OCI-LY7 (cell line): ENCODE measurements at regions of chr17 and their contacts with region 1.

Region 1: GRCh38 chr17:9021158-9021991 is at the start of gene NTN1:
- DNase-seq: peak; percentile 25
- H3K4me3 ChIP-seq: peak within 1 kb of the TSS; percentile 68
- H3K27ac ChIP-seq: no peak within 1 kb of the TSS
- H3K4me1 ChIP-seq: no peaks in the 10 kb centered on the region
- CTCF ChIP-seq: no peak
- total RNA-seq, gene NTN1: 0.05 TPM in 1 of 2 replicates, not detected in the other

Region 2: DNA sequence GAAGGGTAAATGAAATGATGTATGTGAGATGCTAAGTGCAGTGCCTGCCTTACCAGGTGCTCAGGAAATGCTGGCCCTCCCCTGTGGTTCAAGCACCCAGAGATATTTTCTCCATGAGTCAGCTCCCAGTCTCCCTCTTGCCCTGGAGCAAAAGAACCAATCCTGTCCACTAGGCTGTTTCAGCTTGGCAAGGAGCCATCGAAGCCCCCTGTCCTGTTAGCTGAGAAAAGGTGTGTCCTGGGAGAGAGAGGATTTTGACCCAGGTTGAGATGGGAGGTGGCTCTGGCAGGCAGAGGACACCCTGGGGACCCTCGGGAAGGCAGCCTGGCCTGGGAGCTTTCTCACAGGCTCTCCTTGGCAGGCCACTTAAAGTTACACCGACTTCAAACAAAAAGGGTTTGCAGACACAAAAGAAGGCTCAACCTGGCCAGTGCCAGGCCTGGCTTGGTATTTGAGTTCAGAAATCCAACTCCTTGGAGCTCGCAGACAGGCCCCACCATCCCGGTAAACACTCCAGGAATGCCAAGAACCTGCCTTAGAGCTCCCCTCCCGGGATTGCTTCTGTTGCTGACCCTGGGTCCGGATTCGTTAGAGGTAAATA is 29.5 kb after region 1 on chr17:
- CTCF ChIA-PET with region 1: no interaction called
- POLR2A ChIA-PET with region 1: no interaction called
- intact Hi-C with region 1: no loop called
- DNase-seq: no peak
- H3K4me3 ChIP-seq: no peak overlapping the region
- H3K27ac ChIP-seq: no peak overlapping the region
- H3K4me1 ChIP-seq: no peaks in the 10 kb centered on the region
- CTCF ChIP-seq: no peak

Region 3: DNA sequence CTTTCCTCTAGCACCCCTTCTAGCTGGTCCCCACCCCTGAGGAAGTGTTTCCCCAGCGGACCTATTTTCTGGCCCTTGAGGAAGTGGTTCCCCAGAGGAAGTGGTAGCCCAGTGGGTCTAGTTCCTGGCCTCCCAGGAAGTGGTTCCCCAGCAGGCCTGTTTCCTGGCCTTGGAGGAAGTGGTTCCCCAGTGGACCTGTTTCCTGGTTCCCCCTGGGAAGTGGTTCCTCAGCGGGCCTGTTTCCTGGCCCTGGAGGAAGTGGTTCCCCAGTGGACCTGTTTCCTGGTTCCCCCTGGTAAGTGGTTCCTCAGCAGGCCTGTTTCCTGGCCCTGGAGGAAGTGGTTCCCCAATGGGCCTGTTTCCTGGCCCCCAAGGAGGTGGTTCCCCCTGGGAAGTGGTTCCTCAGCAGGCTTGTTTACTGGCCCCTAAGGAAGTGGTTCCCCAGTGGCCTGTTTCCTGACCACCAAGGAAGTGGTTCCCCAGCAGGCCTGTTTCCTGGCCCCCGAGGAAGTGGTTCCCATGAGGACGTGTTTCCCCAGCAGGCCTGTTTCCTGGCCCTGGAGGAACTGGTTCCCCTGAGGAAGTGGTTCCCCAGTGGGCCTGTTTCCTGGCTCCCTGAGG is 58.2 kb after region 1 on chr17:
- CTCF ChIA-PET with region 1: no interaction called
- POLR2A ChIA-PET with region 1: no interaction called
- intact Hi-C with region 1: loop called (anchors 10 kb)
- DNase-seq: peak; percentile 1
- H3K4me3 ChIP-seq: no peak overlapping the region
- H3K27ac ChIP-seq: no peak overlapping the region
- H3K4me1 ChIP-seq: no peaks in the 10 kb centered on the region
- CTCF ChIP-seq: no peak